T-cell (primary cell): ENCODE measurements at regions of chr12 and their contacts with region 1.

Region 1: DNA sequence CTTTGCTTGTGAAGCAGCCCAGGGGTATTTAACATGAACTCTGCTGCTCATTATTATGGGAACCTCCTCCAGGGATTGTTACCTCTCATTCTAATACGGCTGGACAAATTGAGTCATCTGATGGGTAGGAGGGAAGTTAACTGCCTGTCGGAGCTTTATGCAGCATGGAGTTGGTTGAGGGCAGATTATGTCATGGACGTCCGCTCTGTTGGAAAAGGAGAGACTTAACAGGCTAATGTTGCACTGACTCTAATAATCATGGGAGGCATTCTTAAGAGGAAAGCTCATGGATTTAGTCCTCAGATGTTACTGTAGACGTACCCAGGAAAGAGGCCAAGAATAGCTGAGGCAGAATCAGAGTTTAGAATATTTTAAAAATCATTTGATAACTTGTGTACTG is 9.9 kb downstream of the POP5 start:
- DNase-seq: no peak
- ATAC-seq: no peak
- H3K4me3 ChIP-seq: no peak overlapping the region
- H3K4me3 Mint-ChIP-seq: no peak overlapping the region
- H3K27ac ChIP-seq: no peak overlapping the region
- H3K27ac Mint-ChIP-seq: no peak overlapping the region
- H3K4me1 ChIP-seq: no peaks in the 10 kb centered on the region
- H3K4me1 Mint-ChIP-seq: no peaks in the 10 kb centered on the region
- H3K27me3 ChIP-seq: no peaks in the 10 kb centered on the region
- H3K27me3 Mint-ChIP-seq: no peaks in the 10 kb centered on the region

Region 2: DNA sequence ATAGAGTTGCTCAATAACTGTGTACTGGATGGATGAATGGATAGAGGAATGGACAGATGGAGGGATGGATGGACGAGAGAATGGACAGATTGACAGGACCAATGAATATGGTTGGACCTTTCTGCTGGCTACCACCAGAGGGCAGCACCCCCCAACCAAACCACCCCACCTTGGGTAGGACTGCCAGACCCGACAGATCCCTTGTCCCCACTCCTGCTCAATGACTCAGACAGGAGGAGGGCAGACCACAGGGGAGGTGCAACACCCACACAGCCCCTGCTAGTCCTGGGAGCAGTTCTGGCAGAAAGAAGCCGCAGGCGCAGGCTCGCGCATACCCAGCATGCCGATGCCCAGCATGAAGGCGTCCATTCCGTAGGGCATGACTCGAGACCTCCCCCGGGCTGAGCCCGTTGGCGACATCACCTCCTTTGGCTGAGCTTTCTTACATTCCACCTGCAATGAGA is 214.7 kb before region 1 on chr12:
- CTCF ChIA-PET with region 1: no interaction called
- POLR2A ChIA-PET with region 1: interaction called in 1 of 2 experiments, 23 read pairs
- DNase-seq: peak; percentile 17 to 79 (median 62)
- ATAC-seq: peak; percentile 82 to 92 (median 88)
- H3K4me3 ChIP-seq: no peak overlapping the region
- H3K4me3 Mint-ChIP-seq: no peak overlapping the region
- H3K27ac ChIP-seq: no peak overlapping the region
- H3K27ac Mint-ChIP-seq: no peak overlapping the region
- H3K4me1 ChIP-seq: peaks cover 0 to 3% of the 10 kb centered on the region in 2 experiments
- H3K4me1 Mint-ChIP-seq: peaks cover 0 to 6% (median 0%) of the 10 kb centered on the region in 3 donors
- H3K27me3 ChIP-seq: peaks cover 10 to 50% of the 10 kb centered on the region in 2 experiments
- H3K27me3 Mint-ChIP-seq: peaks cover 36 to 41% of the 10 kb centered on the region in 2 donors